Caco-2 (cell line): ENCODE measurements at regions of chr6 and their contacts with region 1.

Region 1: GRCh38 chr6:122609856-122610689 is at the start of gene PKIB:
- DNase-seq: peak; percentile 84 to 89
- H3K4me3 ChIP-seq: peak within 1 kb of the TSS; percentile 74
- H3K4me3 Mint-ChIP-seq: peak within 1 kb of the TSS; percentile 94
- H3K27ac Mint-ChIP-seq: peak within 1 kb of the TSS; percentile 87
- H3K4me1 ChIP-seq: peaks cover 6% of the 10 kb centered on the region; the same call in 1 of the 2 replicates
- H3K4me1 Mint-ChIP-seq: peaks cover 7% of the 10 kb centered on the region
- H3K27me3 ChIP-seq: no peaks in the 10 kb centered on the region
- H3K27me3 Mint-ChIP-seq: no peaks in the 10 kb centered on the region
- CTCF ChIP-seq: peak; percentile 4 to 60
- total RNA-seq, gene PKIB: 18.6 and 18.8 TPM in 2 replicates

Region 2: GRCh38 chr6:122471107-122472021 is 138.7 kb before region 1 on chr6 and contains the start of gene SERINC1:
- CTCF ChIA-PET with region 1: no interaction called
- POLR2A ChIA-PET with region 1: no interaction called
- intact Hi-C with region 1: loop called (anchors 5 kb)
- DNase-seq: peak; percentile 90 to 93
- H3K4me3 ChIP-seq: peak within 1 kb of the TSS; percentile 92
- H3K4me3 Mint-ChIP-seq: peak within 1 kb of the TSS; percentile 93
- H3K27ac Mint-ChIP-seq: peak within 1 kb of the TSS; percentile 92
- H3K4me1 ChIP-seq: peaks cover 5% of the 10 kb centered on the region; the same call in 1 of the 2 replicates
- H3K4me1 Mint-ChIP-seq: no peaks in the 10 kb centered on the region
- H3K27me3 ChIP-seq: no peaks in the 10 kb centered on the region
- H3K27me3 Mint-ChIP-seq: no peaks in the 10 kb centered on the region
- CTCF ChIP-seq: no peak
- total RNA-seq, gene SERINC1: 70.2 and 72.2 TPM in 2 replicates

Region 3: DNA sequence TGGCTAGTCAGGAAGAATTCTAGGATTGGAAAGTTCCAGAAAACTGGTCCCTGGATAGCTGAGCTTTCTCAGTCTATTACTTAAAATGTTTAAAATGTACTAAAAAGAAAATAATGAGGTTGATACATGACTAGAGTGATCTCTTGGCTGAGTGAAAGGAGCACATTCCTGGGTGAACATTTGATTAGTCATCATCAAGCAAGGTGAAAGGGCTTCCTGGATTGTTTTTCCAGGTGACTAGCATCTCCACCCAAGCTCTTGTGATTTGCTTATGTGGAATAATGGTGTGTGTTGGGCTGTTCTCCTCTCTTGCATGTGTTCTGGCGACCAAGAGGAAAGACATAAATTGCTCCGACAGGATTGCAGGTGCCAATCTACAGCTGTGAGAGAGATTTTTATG is 43.0 kb after region 1 on chr6:
- CTCF ChIA-PET with region 1: no interaction called
- POLR2A ChIA-PET with region 1: interaction called, 3 read pairs
- intact Hi-C with region 1: loop called (anchors 1 kb)
- DNase-seq: no peak
- H3K4me3 ChIP-seq: no peak overlapping the region
- H3K4me3 Mint-ChIP-seq: no peak overlapping the region
- H3K27ac Mint-ChIP-seq: peak overlapping the region; percentile 74
- H3K4me1 ChIP-seq: peaks cover 55% of the 10 kb centered on the region
- H3K4me1 Mint-ChIP-seq: peaks cover 25% of the 10 kb centered on the region
- H3K27me3 ChIP-seq: no peaks in the 10 kb centered on the region
- H3K27me3 Mint-ChIP-seq: no peaks in the 10 kb centered on the region
- CTCF ChIP-seq: no peak

Region 4: GRCh38 chr6:122681705-122682104 is 71.6 kb after region 1 on chr6:
- CTCF ChIA-PET with region 1: interaction called, 3 read pairs
- POLR2A ChIA-PET with region 1: no interaction called
- intact Hi-C with region 1: loop called (anchors 1 kb)
- DNase-seq: peak in 1 of 2 experiments; percentile 14
- H3K4me3 ChIP-seq: no peak overlapping the region
- H3K4me3 Mint-ChIP-seq: no peak overlapping the region
- H3K27ac Mint-ChIP-seq: no peak overlapping the region
- H3K4me1 ChIP-seq: no peaks in the 10 kb centered on the region
- H3K4me1 Mint-ChIP-seq: peaks cover 12% of the 10 kb centered on the region
- H3K27me3 ChIP-seq: no peaks in the 10 kb centered on the region
- H3K27me3 Mint-ChIP-seq: no peaks in the 10 kb centered on the region
- CTCF ChIP-seq: peak in 1 of 2 experiments; percentile 17

Region 5: DNA sequence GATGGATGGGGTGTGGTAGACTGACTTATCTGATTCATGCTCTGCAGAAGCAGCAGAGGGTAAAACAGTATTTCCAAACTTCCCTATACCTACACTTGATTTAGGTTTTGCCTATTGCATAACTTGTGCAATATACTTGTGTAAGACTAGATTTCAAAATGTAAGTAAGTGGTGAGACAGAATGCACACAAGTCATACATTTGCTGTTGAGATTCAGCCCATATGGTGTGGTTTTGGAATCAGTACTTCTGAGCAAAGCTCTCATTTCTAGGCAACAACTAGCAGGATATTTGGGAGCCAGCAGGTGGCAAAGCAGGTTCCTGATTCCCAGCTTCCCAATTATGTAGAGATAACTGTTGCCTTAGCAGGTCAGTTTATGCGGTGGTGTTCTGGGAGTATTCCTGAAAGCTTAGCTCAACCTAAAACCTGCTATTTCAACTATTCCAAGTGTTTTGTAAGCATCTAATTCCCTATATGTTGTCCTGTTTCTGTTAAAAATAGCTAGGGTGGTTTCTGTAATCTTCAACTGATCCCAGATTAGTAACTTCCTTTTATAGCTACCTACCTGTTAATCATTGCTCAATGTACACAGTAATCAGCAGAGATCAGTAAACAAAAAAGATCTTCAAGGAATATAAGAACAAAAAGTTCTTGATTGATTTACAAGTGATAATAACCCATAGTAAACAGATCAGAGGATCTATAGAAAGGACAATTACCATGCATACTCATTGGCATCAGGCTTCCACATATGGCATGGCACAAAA is 160.9 kb after region 1 on chr6:
- CTCF ChIA-PET with region 1: no interaction called
- POLR2A ChIA-PET with region 1: no interaction called
- intact Hi-C with region 1: loop called (anchors 5 kb)
- DNase-seq: peak; percentile 50 to 59
- H3K4me3 ChIP-seq: no peak overlapping the region
- H3K4me3 Mint-ChIP-seq: peak overlapping the region; percentile 42
- H3K27ac Mint-ChIP-seq: peak overlapping the region; percentile 66
- H3K4me1 ChIP-seq: peaks cover 52% of the 10 kb centered on the region
- H3K4me1 Mint-ChIP-seq: peaks cover 40% of the 10 kb centered on the region
- H3K27me3 ChIP-seq: no peaks in the 10 kb centered on the region
- H3K27me3 Mint-ChIP-seq: no peaks in the 10 kb centered on the region
- CTCF ChIP-seq: peak; percentile 24 to 49

Region 6: GRCh38 chr6:122839477-122839876 is 229.4 kb after region 1 on chr6:
- CTCF ChIA-PET with region 1: interaction called, 3 read pairs
- POLR2A ChIA-PET with region 1: no interaction called
- intact Hi-C with region 1: loop called (anchors 1 kb)
- DNase-seq: peak; percentile 61 to 81
- H3K4me3 ChIP-seq: no peak overlapping the region
- H3K4me3 Mint-ChIP-seq: no peak overlapping the region
- H3K27ac Mint-ChIP-seq: no peak overlapping the region
- H3K4me1 ChIP-seq: peaks cover 9% of the 10 kb centered on the region
- H3K4me1 Mint-ChIP-seq: peaks cover 10% of the 10 kb centered on the region
- H3K27me3 ChIP-seq: no peaks in the 10 kb centered on the region
- H3K27me3 Mint-ChIP-seq: no peaks in the 10 kb centered on the region
- CTCF ChIP-seq: peak; percentile 58 to 68